ENCODE measurements at regions of chr5 and their contacts with region 1.

Region 1: GRCh38 chr5:17216176-17216973 is 1.1 kb upstream of the BASP1 start:
- DNase-seq: peak; percentile 62
- ATAC-seq: peak; percentile 49
- H3K4me3 ChIP-seq: peak overlapping the region; percentile 52
- H3K27ac ChIP-seq: no peak overlapping the region
- H3K4me1 ChIP-seq: peaks cover 7% of the 10 kb centered on the region; the same call in 1 of the 2 replicates
- H3K27me3 ChIP-seq: no peaks in the 10 kb centered on the region
- CTCF ChIP-seq: peak; percentile 73 to 91 (median 80)
- EP300 ChIP-seq: no peak
- POLR2A ChIP-seq: no peak
- RAD21 ChIP-seq: peak; percentile 98

Region 2: DNA sequence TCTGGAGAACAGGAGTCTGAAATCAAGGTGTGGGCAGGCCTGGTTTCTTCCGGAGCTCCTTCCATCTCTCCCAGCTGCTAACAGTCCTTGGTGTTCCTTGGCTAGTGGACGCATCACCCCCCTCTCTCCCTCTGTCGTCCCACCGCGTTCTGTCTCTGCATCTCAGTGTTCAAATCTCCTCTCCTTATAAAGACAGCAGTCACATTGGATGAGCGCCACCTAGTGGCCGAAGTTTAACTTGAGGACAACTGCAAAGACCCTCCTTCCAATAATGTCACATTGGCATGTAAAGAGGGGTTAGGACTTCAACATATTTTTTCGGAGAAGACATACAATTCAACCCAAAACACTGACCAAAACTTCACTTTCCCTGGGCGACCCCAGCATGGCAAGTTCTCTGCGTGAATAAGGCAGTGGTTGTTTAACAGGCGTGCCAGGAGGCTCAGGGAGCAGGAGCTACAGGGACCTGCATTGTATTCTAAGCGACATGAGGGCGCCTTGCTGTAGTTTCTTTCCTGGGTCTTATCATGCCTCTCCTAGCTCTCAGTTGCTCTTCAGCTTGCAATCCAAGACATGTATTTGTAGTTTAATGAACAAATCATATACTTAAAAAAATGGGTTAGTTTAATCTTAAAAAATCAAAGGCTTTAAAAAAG is 26.9 kb before region 1 on chr5:
- CTCF ChIA-PET with region 1: interaction called, 24 read pairs
- POLR2A ChIA-PET with region 1: no interaction called
- RAD21 ChIA-PET with region 1: interaction called, 9 read pairs
- SMC1A ChIA-PET with region 1: interaction called, 5 read pairs
- in situ Hi-C with region 1: no loop called
- intact Hi-C with region 1: no loop called
- DNase-seq: peak; percentile 24
- ATAC-seq: peak; percentile 92
- H3K4me3 ChIP-seq: no peak overlapping the region
- H3K27ac ChIP-seq: no peak overlapping the region
- H3K4me1 ChIP-seq: no peaks in the 10 kb centered on the region
- H3K27me3 ChIP-seq: no peaks in the 10 kb centered on the region; a peak in 1 of 4 replicates
- CTCF ChIP-seq: peak; percentile 65 to 80 (median 77)
- EP300 ChIP-seq: no peak
- POLR2A ChIP-seq: no peak
- RAD21 ChIP-seq: peak; percentile 54

Region 3: DNA sequence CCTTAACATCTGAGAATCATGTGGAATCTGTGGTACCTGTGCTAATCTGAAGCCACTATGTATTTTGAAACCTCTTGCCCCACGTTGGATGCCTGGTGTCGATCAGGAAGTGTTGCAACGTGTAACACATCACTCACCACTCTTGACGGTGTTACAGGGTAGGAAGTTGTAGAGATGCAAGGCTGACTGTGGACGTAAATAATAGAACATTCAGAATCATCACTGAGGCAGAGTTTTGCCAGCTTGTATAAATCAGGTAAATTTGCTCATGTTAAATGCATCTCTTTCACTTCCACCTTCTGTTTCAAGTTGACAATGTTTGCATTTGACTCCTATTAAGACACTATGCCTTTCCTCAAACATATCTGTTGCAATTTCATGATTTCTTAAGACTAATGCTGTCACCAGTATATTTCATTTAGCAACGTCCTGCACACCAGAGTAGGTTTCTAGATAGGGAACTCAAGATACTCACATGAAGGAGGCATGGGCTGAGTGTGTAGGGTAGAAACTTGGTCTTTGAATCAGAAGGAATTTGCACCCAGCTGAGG is 39.2 kb after region 1 on chr5:
- CTCF ChIA-PET with region 1: interaction called, 20 read pairs
- POLR2A ChIA-PET with region 1: interaction called, 14 read pairs
- RAD21 ChIA-PET with region 1: interaction called, 58 read pairs
- SMC1A ChIA-PET with region 1: interaction called, 150 read pairs
- in situ Hi-C with region 1: no loop called
- intact Hi-C with region 1: no loop called
- DNase-seq: peak; percentile 51
- ATAC-seq: peak; percentile 67
- H3K4me3 ChIP-seq: no peak overlapping the region; the same call in 1 of the 2 replicates
- H3K27ac ChIP-seq: peak overlapping the region; percentile 50; the same call in 1 of the 2 replicates
- H3K4me1 ChIP-seq: peaks cover 26% of the 10 kb centered on the region
- H3K27me3 ChIP-seq: no peaks in the 10 kb centered on the region
- CTCF ChIP-seq: no peak
- EP300 ChIP-seq: peak in 1 of 2 experiments; percentile 50; a peak in 2 of 4 replicates
- POLR2A ChIP-seq: no peak
- RAD21 ChIP-seq: no peak

Region 4: GRCh38 chr5:17316970-17317459 is 100.6 kb after region 1 on chr5:
- CTCF ChIA-PET with region 1: interaction called, 16 read pairs
- POLR2A ChIA-PET with region 1: interaction called, 5 read pairs
- RAD21 ChIA-PET with region 1: interaction called, 29 read pairs
- SMC1A ChIA-PET with region 1: interaction called, 14 read pairs
- in situ Hi-C with region 1: no loop called
- intact Hi-C with region 1: loop called (anchors 1 kb)
- DNase-seq: peak; percentile 82
- ATAC-seq: peak; percentile 79
- H3K4me3 ChIP-seq: 0 out of 2 replicates have a peak overlapping the region, but pooled peaks have one; percentile 16
- H3K27ac ChIP-seq: peak overlapping the region; percentile 66
- H3K4me1 ChIP-seq: peaks cover 43% of the 10 kb centered on the region
- H3K27me3 ChIP-seq: no peaks in the 10 kb centered on the region
- CTCF ChIP-seq: no peak
- EP300 ChIP-seq: peak; percentile 95 to 98
- POLR2A ChIP-seq: no peak
- RAD21 ChIP-seq: no peak

Region 5: DNA sequence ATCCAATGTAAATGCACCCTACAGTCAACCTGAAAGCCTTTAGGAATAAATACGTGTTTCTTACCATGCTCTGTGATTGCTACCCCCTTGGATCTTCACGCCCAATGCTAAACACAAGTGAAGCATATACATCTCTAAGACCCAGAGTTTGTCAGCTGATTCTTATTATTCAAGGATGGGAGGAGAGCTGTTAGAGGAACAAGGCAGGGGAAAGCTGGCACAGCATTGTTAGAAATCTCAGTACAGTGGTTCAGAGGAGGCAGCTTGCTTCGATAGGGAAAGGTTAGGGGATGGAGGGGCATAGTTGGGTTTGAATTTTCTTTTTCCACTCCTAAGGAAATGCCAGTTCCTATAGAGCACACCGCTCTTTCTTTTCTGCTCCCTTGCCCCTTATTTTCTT is 265.0 kb after region 1 on chr5:
- CTCF ChIA-PET with region 1: no interaction called
- POLR2A ChIA-PET with region 1: no interaction called
- RAD21 ChIA-PET with region 1: no interaction called
- SMC1A ChIA-PET with region 1: interaction called, 8 read pairs
- in situ Hi-C with region 1: no loop called
- intact Hi-C with region 1: loop called (anchors 10 kb)
- DNase-seq: no peak
- ATAC-seq: no peak
- H3K4me3 ChIP-seq: no peak overlapping the region
- H3K27ac ChIP-seq: no peak overlapping the region
- H3K4me1 ChIP-seq: no peaks in the 10 kb centered on the region
- H3K27me3 ChIP-seq: no peaks in the 10 kb centered on the region; a peak in 1 of 4 replicates
- CTCF ChIP-seq: no peak
- EP300 ChIP-seq: no peak
- POLR2A ChIP-seq: no peak
- RAD21 ChIP-seq: no peak

Region 6: GRCh38 chr5:18281682-18282557 is 1065.5 kb after region 1 on chr5:
- CTCF ChIA-PET with region 1: interaction called, 38 read pairs
- POLR2A ChIA-PET with region 1: no interaction called
- RAD21 ChIA-PET with region 1: interaction called, 40 read pairs
- SMC1A ChIA-PET with region 1: interaction called, 27 read pairs
- in situ Hi-C with region 1: no loop called
- intact Hi-C with region 1: no loop called
- DNase-seq: no peak
- ATAC-seq: peak; percentile 33; the same call in 1 of the 3 replicates
- H3K4me3 ChIP-seq: no peak overlapping the region
- H3K27ac ChIP-seq: no peak overlapping the region
- H3K4me1 ChIP-seq: no peaks in the 10 kb centered on the region
- H3K27me3 ChIP-seq: no peaks in the 10 kb centered on the region
- CTCF ChIP-seq: peak; percentile 10 to 47 (median 34); a peak in 4 of 6 replicates
- EP300 ChIP-seq: no peak
- POLR2A ChIP-seq: no peak
- RAD21 ChIP-seq: peak; percentile 66

Region 7: GRCh38 chr5:18314192-18314778 is 1097.9 kb after region 1 on chr5:
- CTCF ChIA-PET with region 1: interaction called, 34 read pairs
- POLR2A ChIA-PET with region 1: interaction called, 3 read pairs
- RAD21 ChIA-PET with region 1: interaction called, 23 read pairs
- SMC1A ChIA-PET with region 1: interaction called, 19 read pairs
- in situ Hi-C with region 1: loop called (anchors 5 kb)
- intact Hi-C with region 1: loop called (anchors 1 kb)
- DNase-seq: no peak
- ATAC-seq: peak; percentile 17; the same call in 1 of the 3 replicates
- H3K4me3 ChIP-seq: no peak overlapping the region
- H3K27ac ChIP-seq: no peak overlapping the region
- H3K4me1 ChIP-seq: no peaks in the 10 kb centered on the region
- H3K27me3 ChIP-seq: no peaks in the 10 kb centered on the region
- CTCF ChIP-seq: peak in 2 of 3 experiments; percentile 35 to 45; a peak in 3 of 6 replicates
- EP300 ChIP-seq: no peak
- POLR2A ChIP-seq: no peak
- RAD21 ChIP-seq: peak; percentile 44